CD4-positive, alpha-beta memory T cell (primary cell): ENCODE measurements at regions of chr10 and their contacts with region 1.

Region 1: GRCh38 chr10:102151774-102152544 is at the start of gene NOLC1:
- DNase-seq: peak; percentile 99 to 100 (median 100)
- H3K4me3 ChIP-seq: peak within 1 kb of the TSS; percentile 82 to 91
- H3K4me3 Mint-ChIP-seq: peak within 1 kb of the TSS; percentile 91 to 97 (median 94)
- H3K27ac ChIP-seq: peak within 1 kb of the TSS; percentile 87
- H3K27ac Mint-ChIP-seq: peak within 1 kb of the TSS; percentile 91 to 99 (median 97)
- H3K4me1 ChIP-seq: peaks cover 34% of the 10 kb centered on the region
- H3K4me1 Mint-ChIP-seq: peaks cover 21 to 60% (median 42%) of the 10 kb centered on the region in 4 donors
- H3K27me3 ChIP-seq: no peaks in the 10 kb centered on the region
- H3K27me3 Mint-ChIP-seq: no peaks in the 10 kb centered on the region
- total RNA-seq, gene NOLC1: 63.7 to 71.6 TPM

Region 2: DNA sequence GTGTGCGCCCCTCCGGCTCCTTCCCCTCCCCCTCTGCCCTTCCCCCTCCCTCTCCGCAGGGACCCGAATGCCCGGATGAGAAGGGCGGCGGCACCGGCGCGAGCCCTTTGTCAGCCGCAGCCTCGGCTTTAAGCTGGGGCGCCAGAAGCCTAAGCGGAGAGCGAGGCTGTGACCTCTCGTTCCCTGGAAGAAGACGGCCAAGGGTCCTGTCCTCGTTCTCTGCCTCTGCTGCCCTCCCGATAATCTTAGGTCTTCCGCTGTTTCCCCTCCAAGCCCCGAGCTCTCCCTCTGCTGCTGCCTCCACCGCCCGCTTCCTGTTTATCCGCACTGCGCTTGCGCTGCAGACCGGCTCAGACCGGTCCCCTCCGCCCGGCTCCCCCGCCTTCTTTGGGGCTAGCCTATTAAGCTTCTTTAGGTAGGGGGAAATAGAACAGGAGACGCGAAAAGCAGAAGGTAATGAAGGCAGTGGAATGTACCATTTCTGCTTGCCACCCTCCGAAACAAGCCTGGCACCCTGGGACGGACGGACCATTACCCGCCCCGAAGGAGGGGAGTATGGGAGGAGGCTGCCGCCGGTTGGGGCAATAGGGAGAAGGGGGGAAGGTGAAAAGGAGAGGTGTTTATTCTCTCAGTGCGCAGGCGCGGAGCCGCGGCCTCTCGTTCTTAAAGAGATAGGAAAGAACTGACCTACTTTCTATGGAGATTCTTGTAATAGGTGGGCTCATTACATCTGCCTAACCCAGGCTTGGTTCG is 333.7 kb before region 1 on chr10 and contains the start of gene OGA:
- CTCF ChIA-PET with region 1: no interaction called
- POLR2A ChIA-PET with region 1: interaction called, 4 read pairs
- intact Hi-C with region 1: loop called (anchors 1 kb)
- DNase-seq: peak; percentile 97 to 100 (median 99)
- H3K4me3 ChIP-seq: peak within 1 kb of the TSS; percentile 95
- H3K4me3 Mint-ChIP-seq: peak within 1 kb of the TSS; percentile 94 to 100 (median 98)
- H3K27ac ChIP-seq: peak within 1 kb of the TSS; percentile 85
- H3K27ac Mint-ChIP-seq: peak within 1 kb of the TSS; percentile 91 to 100 (median 97)
- H3K4me1 ChIP-seq: peaks cover 47% of the 10 kb centered on the region
- H3K4me1 Mint-ChIP-seq: peaks cover 31 to 59% (median 42%) of the 10 kb centered on the region in 4 donors
- H3K27me3 ChIP-seq: no peaks in the 10 kb centered on the region
- H3K27me3 Mint-ChIP-seq: no peaks in the 10 kb centered on the region
- total RNA-seq, gene OGA: 307 to 325 TPM

Region 3: DNA sequence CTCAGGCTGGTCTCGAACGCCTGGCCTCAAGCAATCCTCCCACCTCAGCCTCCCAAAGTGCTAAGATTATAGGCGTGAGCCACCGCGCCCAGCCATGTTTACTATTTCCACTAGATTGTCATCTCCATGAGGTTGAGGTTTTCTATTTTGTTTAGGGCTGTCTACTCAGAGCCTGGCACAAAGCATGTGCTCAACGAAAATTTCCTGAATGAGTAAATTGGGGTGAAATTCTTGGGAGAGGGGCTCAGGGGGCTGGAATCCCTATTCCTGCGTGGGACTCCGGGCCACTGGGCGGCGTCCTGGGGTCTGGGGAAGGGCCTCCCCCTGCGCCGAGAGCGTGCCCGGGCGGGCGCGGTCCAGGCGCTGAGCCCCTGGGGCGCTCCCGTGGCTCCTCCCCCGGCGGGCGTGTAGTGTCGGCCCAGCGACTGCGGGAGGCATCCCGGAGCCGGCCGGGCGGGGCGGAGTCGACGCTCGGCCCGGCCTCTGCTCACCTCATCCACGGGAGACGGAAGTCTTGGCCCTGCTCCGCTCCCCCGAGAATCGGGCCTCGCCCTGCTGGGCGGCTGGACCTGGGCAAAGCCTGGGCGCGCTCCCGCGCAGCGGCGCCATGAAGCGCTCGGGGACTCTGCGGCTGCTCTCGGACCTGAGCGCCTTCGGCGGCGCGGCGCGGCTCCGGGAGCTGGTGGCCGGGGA is 86.9 kb before region 1 on chr10 and contains the start of gene HPS6:
- CTCF ChIA-PET with region 1: no interaction called
- POLR2A ChIA-PET with region 1: no interaction called
- intact Hi-C with region 1: loop called (anchors 1 kb)
- DNase-seq: peak; percentile 86 to 90 (median 88)
- H3K4me3 ChIP-seq: peak within 1 kb of the TSS; percentile 49 to 57
- H3K4me3 Mint-ChIP-seq: peak within 1 kb of the TSS; percentile 87 to 92 (median 88)
- H3K27ac ChIP-seq: peak within 1 kb of the TSS; percentile 90
- H3K27ac Mint-ChIP-seq: peak within 1 kb of the TSS; percentile 92 to 99 (median 96)
- H3K4me1 ChIP-seq: peaks cover 42% of the 10 kb centered on the region
- H3K4me1 Mint-ChIP-seq: peaks cover 19 to 39% (median 29%) of the 10 kb centered on the region in 4 donors
- H3K27me3 ChIP-seq: no peaks in the 10 kb centered on the region
- H3K27me3 Mint-ChIP-seq: no peaks in the 10 kb centered on the region
- total RNA-seq, gene HPS6: 25.1 to 27.9 TPM

Region 4: DNA sequence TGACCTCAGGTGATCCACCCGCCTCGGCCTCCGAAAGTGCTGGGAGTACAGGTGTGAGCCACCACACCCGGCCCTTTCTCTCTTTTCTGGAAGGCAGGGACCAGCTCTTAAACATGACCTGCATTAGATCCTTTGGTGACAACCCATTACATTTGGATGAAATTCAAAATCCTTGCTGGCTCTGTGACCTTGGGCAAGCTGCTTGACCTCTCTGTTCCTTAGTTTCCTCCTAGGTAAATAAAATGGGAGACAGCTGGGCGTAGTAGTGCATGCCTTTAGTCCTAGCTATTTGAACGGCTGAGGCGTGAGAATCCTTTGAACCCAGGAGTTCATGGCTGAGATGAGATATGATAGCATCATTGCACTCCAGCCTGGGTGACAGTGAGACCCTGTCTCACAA is 55.5 kb before region 1 on chr10:
- CTCF ChIA-PET with region 1: no interaction called
- POLR2A ChIA-PET with region 1: no interaction called
- intact Hi-C with region 1: no loop called
- DNase-seq: no peak
- H3K4me3 ChIP-seq: no peak overlapping the region
- H3K4me3 Mint-ChIP-seq: no peak overlapping the region
- H3K27ac ChIP-seq: no peak overlapping the region
- H3K27ac Mint-ChIP-seq: no peak overlapping the region
- H3K4me1 ChIP-seq: no peaks in the 10 kb centered on the region
- H3K4me1 Mint-ChIP-seq: peaks cover 0 to 2% (median 0%) of the 10 kb centered on the region in 4 donors
- H3K27me3 ChIP-seq: no peaks in the 10 kb centered on the region
- H3K27me3 Mint-ChIP-seq: no peaks in the 10 kb centered on the region

Region 5: GRCh38 chr10:102120142-102120990 is 31.6 kb before region 1 on chr10 and contains the start of gene LDB1:
- CTCF ChIA-PET with region 1: interaction called, 3 read pairs
- POLR2A ChIA-PET with region 1: interaction called, 17 read pairs
- intact Hi-C with region 1: loop called (anchors 1 kb)
- DNase-seq: peak; percentile 72 to 81 (median 77)
- H3K4me3 ChIP-seq: peak within 1 kb of the TSS; percentile 78 to 86
- H3K4me3 Mint-ChIP-seq: peak within 1 kb of the TSS; percentile 91 to 95 (median 94)
- H3K27ac ChIP-seq: peak within 1 kb of the TSS; percentile 90
- H3K27ac Mint-ChIP-seq: peak within 1 kb of the TSS; percentile 92 to 98 (median 96)
- H3K4me1 ChIP-seq: peaks cover 49% of the 10 kb centered on the region
- H3K4me1 Mint-ChIP-seq: peaks cover 33 to 70% (median 50%) of the 10 kb centered on the region in 4 donors
- H3K27me3 ChIP-seq: no peaks in the 10 kb centered on the region
- H3K27me3 Mint-ChIP-seq: no peaks in the 10 kb centered on the region
- total RNA-seq, gene LDB1: 131 to 135 TPM

Region 6: DNA sequence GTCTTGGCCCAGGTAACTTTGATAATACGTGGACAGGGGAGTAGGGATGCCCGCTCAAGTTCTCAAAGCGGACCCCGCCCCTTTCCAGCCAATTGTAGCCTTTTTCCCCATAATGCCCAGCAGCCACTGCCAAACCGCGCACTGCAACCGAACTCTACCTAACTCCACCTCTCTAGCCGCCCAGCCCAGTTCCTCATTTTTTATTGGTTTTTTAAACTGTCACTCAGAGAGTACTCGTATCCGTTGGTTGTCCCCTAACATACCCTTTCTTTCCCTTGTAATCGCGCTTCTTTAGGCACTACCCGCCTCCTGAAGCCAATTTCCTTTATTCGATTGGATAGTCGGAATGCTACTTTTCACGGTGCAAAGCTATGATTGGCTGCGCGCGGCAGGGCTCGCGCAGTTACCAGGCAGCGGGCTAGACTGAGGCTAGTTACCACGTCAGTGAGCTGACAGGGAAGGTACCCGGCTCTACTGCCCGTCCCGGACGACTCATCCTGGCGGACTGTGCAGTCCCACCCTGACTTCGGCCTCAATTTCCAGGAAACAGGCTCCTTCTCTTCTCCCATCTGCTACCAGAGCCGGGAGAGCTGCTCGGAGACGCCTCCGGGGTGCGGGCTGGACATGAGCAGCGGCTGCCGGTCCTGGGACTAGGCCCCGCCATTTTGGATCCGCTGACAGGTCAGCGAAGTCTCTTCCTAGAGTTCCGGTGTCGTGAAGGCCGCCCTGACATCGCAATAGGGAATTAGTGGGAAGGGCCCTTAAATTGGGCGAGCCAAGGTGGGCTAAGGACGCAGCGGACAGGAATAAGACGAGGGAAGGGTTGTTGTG is 93.4 kb after region 1 on chr10 and contains the start of gene GBF1:
- CTCF ChIA-PET with region 1: no interaction called
- POLR2A ChIA-PET with region 1: no interaction called
- intact Hi-C with region 1: loop called (anchors 1 kb)
- DNase-seq: peak; percentile 95 to 98 (median 96)
- H3K4me3 ChIP-seq: peak within 1 kb of the TSS; percentile 51 to 94
- H3K4me3 Mint-ChIP-seq: peak within 1 kb of the TSS; percentile 84 to 99 (median 98)
- H3K27ac ChIP-seq: peak within 1 kb of the TSS; percentile 96
- H3K27ac Mint-ChIP-seq: peak within 1 kb of the TSS; percentile 89 to 98 (median 97)
- H3K4me1 ChIP-seq: peaks cover 64% of the 10 kb centered on the region
- H3K4me1 Mint-ChIP-seq: peaks cover 38 to 66% (median 50%) of the 10 kb centered on the region in 4 donors
- H3K27me3 ChIP-seq: peaks cover 6% of the 10 kb centered on the region
- H3K27me3 Mint-ChIP-seq: peaks cover 3 to 16% of the 10 kb centered on the region in 2 donors
- total RNA-seq, gene GBF1: 39.6 to 44.7 TPM

Region 7: DNA sequence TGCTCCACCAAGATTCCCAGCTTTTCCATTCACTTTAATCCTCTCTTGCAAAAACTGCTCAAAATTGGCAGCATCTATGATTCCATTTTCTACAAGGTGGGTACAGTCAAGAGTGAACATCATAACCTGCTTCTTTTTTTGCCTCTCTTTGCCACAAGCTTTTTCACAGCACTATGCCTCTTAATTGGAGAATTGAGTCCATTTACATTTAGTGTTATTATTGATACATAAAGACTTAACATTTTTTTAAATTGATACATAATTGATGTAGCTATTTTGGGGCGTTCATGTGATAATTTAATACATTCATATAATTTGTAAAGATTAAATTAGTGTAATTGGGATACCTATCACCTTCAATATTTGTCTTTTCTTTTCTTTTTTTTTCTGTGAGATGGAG is 736.1 kb after region 1 on chr10:
- CTCF ChIA-PET with region 1: no interaction called
- POLR2A ChIA-PET with region 1: no interaction called
- intact Hi-C with region 1: no loop called
- DNase-seq: no peak
- H3K4me3 ChIP-seq: no peak overlapping the region
- H3K4me3 Mint-ChIP-seq: no peak overlapping the region
- H3K27ac ChIP-seq: no peak overlapping the region
- H3K27ac Mint-ChIP-seq: no peak overlapping the region
- H3K4me1 ChIP-seq: no peaks in the 10 kb centered on the region
- H3K4me1 Mint-ChIP-seq: no peaks in the 10 kb centered on the region
- H3K27me3 ChIP-seq: no peaks in the 10 kb centered on the region
- H3K27me3 Mint-ChIP-seq: no peaks in the 10 kb centered on the region